CD4-positive, alpha-beta memory T cell (primary cell): ENCODE measurements at regions of chr4 and their contacts with region 1.

Region 1: GRCh38 chr4:15001869-15002658 is at the start of gene CPEB2:
- DNase-seq: peak; percentile 90 to 95 (median 92)
- H3K4me3 ChIP-seq: peak within 1 kb of the TSS; percentile 81 to 96
- H3K4me3 Mint-ChIP-seq: peak within 1 kb of the TSS; percentile 90 to 98 (median 94)
- H3K27ac ChIP-seq: peak within 1 kb of the TSS; percentile 100
- H3K27ac Mint-ChIP-seq: peak within 1 kb of the TSS; percentile 97 to 99 (median 98)
- H3K4me1 ChIP-seq: peaks cover 21% of the 10 kb centered on the region
- H3K4me1 Mint-ChIP-seq: peaks cover 12 to 31% (median 20%) of the 10 kb centered on the region in 4 donors
- H3K27me3 ChIP-seq: no peaks in the 10 kb centered on the region
- H3K27me3 Mint-ChIP-seq: no peaks in the 10 kb centered on the region
- total RNA-seq, gene CPEB2: 15.7 to 16.9 TPM

Region 2: DNA sequence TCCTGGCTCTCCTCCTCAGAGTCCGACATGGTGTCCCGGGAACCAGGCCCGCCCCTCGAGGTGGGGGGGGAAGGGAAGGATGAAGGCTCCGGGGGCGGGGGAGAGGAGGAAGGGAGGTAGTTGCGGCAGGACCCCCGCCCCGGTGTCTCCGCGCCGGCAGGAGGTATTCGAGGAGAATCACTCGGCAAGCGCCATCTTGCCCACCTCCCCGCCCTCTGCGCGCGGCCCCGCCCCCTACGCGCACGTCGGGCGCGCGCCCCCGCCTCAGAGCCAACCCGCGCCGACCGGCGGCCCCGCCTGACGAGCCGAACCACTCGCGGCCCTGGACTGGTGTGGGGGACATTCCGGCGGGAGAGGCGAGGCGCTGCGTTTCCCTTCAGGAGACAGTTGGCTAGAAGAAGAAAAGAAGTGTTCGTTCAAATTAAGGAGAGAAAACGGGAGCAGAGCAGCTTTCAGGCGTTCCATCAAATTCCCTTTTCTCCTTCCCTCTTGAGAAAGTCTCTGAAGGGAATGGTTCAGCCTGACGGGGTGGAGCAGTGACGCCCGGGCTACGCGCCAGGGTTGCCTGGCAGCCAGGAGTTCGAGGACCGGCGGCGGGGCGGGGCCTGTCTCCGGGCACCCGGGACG is 1517.8 kb before region 1 on chr4 and contains the start of gene RAB28:
- CTCF ChIA-PET with region 1: no interaction called
- POLR2A ChIA-PET with region 1: no interaction called
- intact Hi-C with region 1: loop called (anchors 1 kb)
- DNase-seq: peak; percentile 95 to 97 (median 96)
- H3K4me3 ChIP-seq: peak within 1 kb of the TSS; percentile 77 to 81
- H3K4me3 Mint-ChIP-seq: peak within 1 kb of the TSS; percentile 73 to 96 (median 90)
- H3K27ac ChIP-seq: peak within 1 kb of the TSS; percentile 93
- H3K27ac Mint-ChIP-seq: peak within 1 kb of the TSS; percentile 85 to 99 (median 99)
- H3K4me1 ChIP-seq: peaks cover 19% of the 10 kb centered on the region
- H3K4me1 Mint-ChIP-seq: peaks cover 14 to 27% (median 22%) of the 10 kb centered on the region in 4 donors
- H3K27me3 ChIP-seq: no peaks in the 10 kb centered on the region
- H3K27me3 Mint-ChIP-seq: peaks cover 12 to 14% of the 10 kb centered on the region in 2 donors
- total RNA-seq, gene RAB28: 13.3 to 14.0 TPM

Region 3: GRCh38 chr4:13654158-13654797 is 1347.8 kb before region 1 on chr4:
- CTCF ChIA-PET with region 1: interaction called, 3 read pairs
- POLR2A ChIA-PET with region 1: interaction called, 3 read pairs
- intact Hi-C with region 1: loop called (anchors 2 kb)
- DNase-seq: peak; percentile 67 to 74 (median 70)
- H3K4me3 ChIP-seq: peak overlapping the region; percentile 76 to 82
- H3K4me3 Mint-ChIP-seq: peak overlapping the region; percentile 89 to 94 (median 90)
- H3K27ac ChIP-seq: no peak overlapping the region
- H3K27ac Mint-ChIP-seq: peak overlapping the region in 3 of 7 donors; percentile 49 to 74 (median 63)
- H3K4me1 ChIP-seq: peaks cover 7% of the 10 kb centered on the region
- H3K4me1 Mint-ChIP-seq: peaks cover 8 to 19% (median 11%) of the 10 kb centered on the region in 4 donors
- H3K27me3 ChIP-seq: no peaks in the 10 kb centered on the region
- H3K27me3 Mint-ChIP-seq: peaks cover 6 to 13% of the 10 kb centered on the region in 2 donors

Region 4: GRCh38 chr4:14636563-14636962 is 365.5 kb before region 1 on chr4:
- CTCF ChIA-PET with region 1: no interaction called
- POLR2A ChIA-PET with region 1: no interaction called
- intact Hi-C with region 1: no loop called
- DNase-seq: no peak
- H3K4me3 ChIP-seq: no peak overlapping the region
- H3K4me3 Mint-ChIP-seq: no peak overlapping the region
- H3K27ac ChIP-seq: no peak overlapping the region
- H3K27ac Mint-ChIP-seq: no peak overlapping the region
- H3K4me1 ChIP-seq: no peaks in the 10 kb centered on the region
- H3K4me1 Mint-ChIP-seq: no peaks in the 10 kb centered on the region
- H3K27me3 ChIP-seq: no peaks in the 10 kb centered on the region
- H3K27me3 Mint-ChIP-seq: peaks cover 1 to 3% of the 10 kb centered on the region in 2 donors

Region 5: GRCh38 chr4:14924812-14925344 is 77.2 kb before region 1 on chr4:
- CTCF ChIA-PET with region 1: no interaction called
- POLR2A ChIA-PET with region 1: no interaction called
- intact Hi-C with region 1: loop called (anchors 2 kb)
- DNase-seq: peak in 2 of 5 donors; percentile 15 to 43
- H3K4me3 ChIP-seq: no peak overlapping the region
- H3K4me3 Mint-ChIP-seq: no peak overlapping the region
- H3K27ac ChIP-seq: no peak overlapping the region
- H3K27ac Mint-ChIP-seq: no peak overlapping the region
- H3K4me1 ChIP-seq: no peaks in the 10 kb centered on the region
- H3K4me1 Mint-ChIP-seq: no peaks in the 10 kb centered on the region
- H3K27me3 ChIP-seq: no peaks in the 10 kb centered on the region
- H3K27me3 Mint-ChIP-seq: no peaks in the 10 kb centered on the region

Region 6: GRCh38 chr4:15253201-15253748 is 251.2 kb after region 1 on chr4:
- CTCF ChIA-PET with region 1: no interaction called
- POLR2A ChIA-PET with region 1: no interaction called
- intact Hi-C with region 1: no loop called
- DNase-seq: no peak
- H3K4me3 ChIP-seq: no peak overlapping the region
- H3K4me3 Mint-ChIP-seq: no peak overlapping the region
- H3K27ac ChIP-seq: no peak overlapping the region
- H3K27ac Mint-ChIP-seq: no peak overlapping the region
- H3K4me1 ChIP-seq: no peaks in the 10 kb centered on the region
- H3K4me1 Mint-ChIP-seq: peaks cover 0 to 5% (median 0%) of the 10 kb centered on the region in 4 donors
- H3K27me3 ChIP-seq: no peaks in the 10 kb centered on the region
- H3K27me3 Mint-ChIP-seq: peaks cover 2% of the 10 kb centered on the region in 2 donors

Region 7: DNA sequence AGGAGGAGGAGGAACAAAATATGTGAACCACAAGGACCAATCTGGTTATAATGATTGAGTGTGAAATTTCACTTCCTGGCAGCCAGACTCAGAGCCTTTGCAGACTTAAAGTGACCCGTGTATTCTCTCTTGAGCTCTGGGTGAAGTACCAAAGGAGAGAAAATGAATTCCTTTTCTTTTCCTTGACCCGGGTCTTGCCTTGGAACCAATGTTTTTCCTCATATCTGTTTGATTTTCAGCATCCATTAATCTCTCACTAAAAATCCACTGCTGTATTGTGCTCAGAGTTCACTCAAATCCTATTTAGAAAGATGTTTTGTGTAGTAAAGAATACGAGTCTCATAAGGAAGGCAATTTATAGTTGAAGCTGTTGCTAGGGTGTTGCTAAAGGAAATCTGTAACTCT is 347.5 kb after region 1 on chr4:
- CTCF ChIA-PET with region 1: no interaction called
- POLR2A ChIA-PET with region 1: no interaction called
- intact Hi-C with region 1: no loop called
- DNase-seq: no peak
- H3K4me3 ChIP-seq: no peak overlapping the region
- H3K4me3 Mint-ChIP-seq: no peak overlapping the region
- H3K27ac ChIP-seq: no peak overlapping the region
- H3K27ac Mint-ChIP-seq: no peak overlapping the region
- H3K4me1 ChIP-seq: no peaks in the 10 kb centered on the region
- H3K4me1 Mint-ChIP-seq: no peaks in the 10 kb centered on the region
- H3K27me3 ChIP-seq: no peaks in the 10 kb centered on the region
- H3K27me3 Mint-ChIP-seq: peaks cover 2 to 6% of the 10 kb centered on the region in 2 donors

Region 8: GRCh38 chr4:15649914-15650545 is 648.0 kb after region 1 on chr4:
- CTCF ChIA-PET with region 1: no interaction called
- POLR2A ChIA-PET with region 1: interaction called, 26 read pairs
- intact Hi-C with region 1: loop called (anchors 1 kb)
- DNase-seq: peak; percentile 74 to 81 (median 75)
- H3K4me3 ChIP-seq: no peak overlapping the region
- H3K4me3 Mint-ChIP-seq: peak overlapping the region in 7 of 8 donors; percentile 1 to 75 (median 36)
- H3K27ac ChIP-seq: no peak overlapping the region
- H3K27ac Mint-ChIP-seq: peak overlapping the region in 6 of 7 donors; percentile 7 to 69 (median 38)
- H3K4me1 ChIP-seq: peaks cover 80% of the 10 kb centered on the region
- H3K4me1 Mint-ChIP-seq: peaks cover 43 to 80% (median 56%) of the 10 kb centered on the region in 4 donors
- H3K27me3 ChIP-seq: no peaks in the 10 kb centered on the region
- H3K27me3 Mint-ChIP-seq: no peaks in the 10 kb centered on the region

Region 9: GRCh38 chr4:15681207-15682015 is 679.3 kb after region 1 on chr4 and contains the start of gene FAM200B:
- CTCF ChIA-PET with region 1: interaction called, 4 read pairs
- POLR2A ChIA-PET with region 1: interaction called, 11 read pairs
- intact Hi-C with region 1: loop called (anchors 1 kb)
- DNase-seq: peak; percentile 92 to 96 (median 93)
- H3K4me3 ChIP-seq: peak within 1 kb of the TSS; percentile 72 to 99
- H3K4me3 Mint-ChIP-seq: peak within 1 kb of the TSS; percentile 90 to 98 (median 96)
- H3K27ac ChIP-seq: peak within 1 kb of the TSS; percentile 70
- H3K27ac Mint-ChIP-seq: peak within 1 kb of the TSS; percentile 86 to 98 (median 97)
- H3K4me1 ChIP-seq: peaks cover 30% of the 10 kb centered on the region
- H3K4me1 Mint-ChIP-seq: peaks cover 26 to 46% (median 34%) of the 10 kb centered on the region in 4 donors
- H3K27me3 ChIP-seq: no peaks in the 10 kb centered on the region
- H3K27me3 Mint-ChIP-seq: no peaks in the 10 kb centered on the region
- total RNA-seq, gene FAM200B: 35.5 to 37.4 TPM

Region 10: DNA sequence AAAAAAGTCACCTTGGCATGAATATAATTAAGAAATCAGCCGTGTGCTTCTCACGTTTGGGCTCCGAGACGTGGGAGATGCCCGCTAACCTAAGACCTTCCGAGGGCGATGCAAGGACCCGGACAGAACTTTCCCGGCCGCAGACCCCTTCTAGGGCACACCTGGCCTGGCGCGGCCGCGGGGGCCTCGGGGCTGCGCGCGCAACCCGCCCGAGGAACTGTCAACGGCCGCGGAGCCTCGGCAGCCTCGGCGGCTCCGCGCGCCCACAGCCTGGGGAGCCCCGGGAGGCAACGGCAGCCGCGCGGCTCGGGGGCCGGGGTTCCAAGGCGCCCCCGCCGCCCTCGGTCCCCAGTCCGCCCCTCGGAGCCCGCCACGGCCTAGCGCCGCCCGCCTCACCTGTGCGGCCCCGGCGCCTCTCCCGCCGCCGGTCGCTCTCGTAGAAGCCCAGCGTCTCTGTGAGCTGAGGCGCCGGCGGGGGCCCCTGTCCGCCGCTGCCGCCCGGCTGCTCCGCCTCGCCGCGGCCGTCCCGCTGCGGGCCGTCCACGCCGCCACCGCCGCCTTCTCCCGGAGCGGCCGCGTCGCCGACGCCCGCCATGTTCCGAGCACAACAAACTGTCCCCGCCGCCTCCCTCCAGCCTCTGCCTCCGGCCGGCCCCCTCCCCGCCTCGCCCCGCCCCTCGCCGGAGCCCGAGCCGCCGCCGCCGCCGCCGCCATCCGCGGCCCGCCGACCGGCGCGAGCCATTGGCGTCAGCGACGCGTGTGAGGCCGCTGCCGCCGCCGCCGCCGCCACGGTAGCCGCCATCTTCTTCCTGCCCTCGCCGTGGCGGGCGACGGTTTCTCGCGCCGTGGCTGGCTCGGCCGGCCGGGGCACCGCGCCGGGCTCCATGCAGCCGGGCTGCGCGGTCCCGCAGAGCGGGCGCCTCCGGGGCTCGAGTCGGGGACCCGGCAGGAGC is 1224.1 kb after region 1 on chr4 and contains the start of gene TAPT1:
- CTCF ChIA-PET with region 1: no interaction called
- POLR2A ChIA-PET with region 1: interaction called, 6 read pairs
- intact Hi-C with region 1: loop called (anchors 5 kb)
- DNase-seq: peak; percentile 70 to 80 (median 72)
- H3K4me3 ChIP-seq: peak within 1 kb of the TSS; percentile 67 to 97
- H3K4me3 Mint-ChIP-seq: peak within 1 kb of the TSS; percentile 92 to 97 (median 93)
- H3K27ac ChIP-seq: peak within 1 kb of the TSS; percentile 69
- H3K27ac Mint-ChIP-seq: peak within 1 kb of the TSS; percentile 96 to 97 (median 96)
- H3K4me1 ChIP-seq: peaks cover 50% of the 10 kb centered on the region
- H3K4me1 Mint-ChIP-seq: peaks cover 36 to 72% (median 47%) of the 10 kb centered on the region in 4 donors
- H3K27me3 ChIP-seq: no peaks in the 10 kb centered on the region
- H3K27me3 Mint-ChIP-seq: no peaks in the 10 kb centered on the region
- total RNA-seq, gene TAPT1: 55.1 to 57.5 TPM